HCT116 (cell line): ENCODE measurements at regions of chr2 and their contacts with region 1.

Region 1: GRCh38 chr2:113138428-113139322 is 11.3 kb downstream of the IL1RN start:
- DNase-seq: peak; percentile 79
- ATAC-seq: peak; percentile 80
- H3K4me3 ChIP-seq: 0 out of 4 replicates have a peak overlapping the region, but pooled peaks of 1 of the 2 experiments have one; percentile 5
- H3K27ac ChIP-seq: no peak overlapping the region
- H3K4me1 ChIP-seq: peaks cover 0 to 16% of the 10 kb centered on the region in 2 experiments; a peak in 3 of 4 replicates
- H3K27me3 ChIP-seq: no peaks in the 10 kb centered on the region
- CTCF ChIP-seq: peak; percentile 75 to 93 (median 75)
- POLR2A ChIP-seq: no peak
- RAD21 ChIP-seq: peak; percentile 77

Region 2: GRCh38 chr2:113080134-113080533 is 58.5 kb before region 1 on chr2:
- CTCF ChIA-PET with region 1: interaction called, 24 read pairs
- POLR2A ChIA-PET with region 1: no interaction called
- RAD21 ChIA-PET with region 1: no interaction called
- intact Hi-C with region 1: no loop called
- DNase-seq: peak; percentile 13
- ATAC-seq: peak; percentile 86
- H3K4me3 ChIP-seq: no peak overlapping the region
- H3K27ac ChIP-seq: no peak overlapping the region
- H3K4me1 ChIP-seq: peaks cover 12 to 26% of the 10 kb centered on the region in 2 experiments
- H3K27me3 ChIP-seq: no peaks in the 10 kb centered on the region
- CTCF ChIP-seq: peak; percentile 79 to 91 (median 85)
- POLR2A ChIP-seq: no peak
- RAD21 ChIP-seq: peak; percentile 87

Region 3: DNA sequence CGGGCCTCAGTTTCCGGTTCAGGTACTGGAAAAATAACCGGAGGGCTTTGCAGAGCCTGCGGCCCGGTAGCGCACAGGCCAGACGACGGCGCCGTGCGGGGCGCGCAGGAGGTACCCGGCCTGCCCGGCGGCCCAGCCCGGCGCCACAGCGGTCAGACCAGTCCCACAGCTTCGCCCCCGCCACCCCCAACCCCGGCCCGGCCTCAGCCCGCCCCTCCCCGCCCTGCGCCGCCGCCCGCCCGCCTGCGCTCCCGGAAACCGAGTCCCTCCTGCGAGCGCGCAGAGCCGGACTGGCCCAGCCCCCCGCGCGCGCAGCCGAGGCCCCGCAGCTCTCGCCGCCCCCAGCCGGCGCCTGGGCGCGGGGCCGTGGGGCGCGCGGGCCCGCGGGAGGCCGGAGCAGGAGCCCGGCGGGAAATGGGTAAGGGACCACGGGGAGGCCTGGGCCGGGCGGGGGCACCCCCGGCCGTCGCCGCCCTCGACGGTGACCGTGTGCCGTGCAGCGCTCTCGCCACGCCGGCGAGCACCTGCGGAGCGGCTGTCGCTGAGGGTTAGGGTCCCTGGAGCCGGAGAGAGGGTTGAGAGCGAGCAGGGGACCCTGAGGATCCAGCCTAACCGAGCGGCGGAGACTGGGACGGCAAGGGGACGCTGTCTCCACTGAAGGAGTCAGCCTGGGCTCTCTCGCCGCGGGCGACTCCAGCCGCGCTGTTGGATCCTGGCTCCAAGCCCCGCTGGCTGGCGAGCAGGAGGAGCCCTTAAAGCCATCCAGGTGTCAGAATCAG is 18.6 kb after region 1 on chr2:
- CTCF ChIA-PET with region 1: interaction called, 51 read pairs
- POLR2A ChIA-PET with region 1: interaction called, 7 read pairs
- RAD21 ChIA-PET with region 1: interaction called in 1 of 2 experiments, 4 read pairs
- intact Hi-C with region 1: no loop called
- DNase-seq: no peak
- ATAC-seq: peak; percentile 84
- H3K4me3 ChIP-seq: peak overlapping the region; percentile 66 to 74
- H3K27ac ChIP-seq: peak overlapping the region; percentile 80
- H3K4me1 ChIP-seq: peaks cover 22 to 35% of the 10 kb centered on the region in 2 experiments; a peak in 3 of 4 replicates
- H3K27me3 ChIP-seq: no peaks in the 10 kb centered on the region
- CTCF ChIP-seq: no peak
- POLR2A ChIP-seq: no peak
- RAD21 ChIP-seq: no peak

Region 4: DNA sequence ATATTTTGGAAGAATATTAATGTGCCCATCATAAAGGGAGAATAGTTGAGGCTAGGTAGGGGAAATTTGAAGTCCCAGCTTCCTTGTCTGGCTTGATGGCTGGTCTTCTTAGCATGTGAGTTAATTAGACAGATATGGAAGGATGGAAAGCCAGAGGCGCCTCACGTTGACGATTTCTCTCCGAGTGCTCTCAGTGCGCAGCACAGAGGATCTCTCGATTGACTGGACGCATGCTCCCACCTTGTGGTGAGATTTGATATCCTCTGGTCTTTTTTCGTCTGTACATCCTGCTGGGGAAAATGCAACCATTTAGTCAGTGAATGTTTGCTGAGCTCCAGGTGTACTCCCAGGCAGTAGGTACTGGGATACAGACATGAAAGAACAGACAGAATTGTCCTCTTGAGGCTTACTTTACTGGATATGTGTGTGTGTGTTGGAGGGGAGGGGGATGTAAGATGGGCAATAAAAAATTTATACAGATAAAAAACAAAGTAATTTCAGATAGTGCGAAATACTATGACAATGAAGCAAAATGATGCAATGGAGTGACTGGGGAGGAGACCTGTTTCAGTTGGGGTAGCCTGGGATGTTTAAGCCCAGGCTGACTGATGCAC is 231.9 kb after region 1 on chr2:
- CTCF ChIA-PET with region 1: interaction called, 15 read pairs
- POLR2A ChIA-PET with region 1: no interaction called
- RAD21 ChIA-PET with region 1: interaction called in 1 of 2 experiments, 3 read pairs
- intact Hi-C with region 1: loop called (anchors 1 kb)
- DNase-seq: peak; percentile 65
- ATAC-seq: peak; percentile 97
- H3K4me3 ChIP-seq: no peak overlapping the region
- H3K27ac ChIP-seq: no peak overlapping the region
- H3K4me1 ChIP-seq: peaks cover 0 to 4% of the 10 kb centered on the region in 2 experiments; a peak in 1 of 4 replicates
- H3K27me3 ChIP-seq: no peaks in the 10 kb centered on the region
- CTCF ChIP-seq: peak; percentile 55 to 97 (median 68)
- POLR2A ChIP-seq: no peak
- RAD21 ChIP-seq: peak; percentile 97

Region 5: GRCh38 chr2:113390124-113390849 is 251.6 kb after region 1 on chr2:
- CTCF ChIA-PET with region 1: interaction called, 18 read pairs
- POLR2A ChIA-PET with region 1: no interaction called
- RAD21 ChIA-PET with region 1: no interaction called
- intact Hi-C with region 1: loop called (anchors 5 kb)
- DNase-seq: peak; percentile 72
- ATAC-seq: peak; percentile 83
- H3K4me3 ChIP-seq: no peak overlapping the region
- H3K27ac ChIP-seq: no peak overlapping the region
- H3K4me1 ChIP-seq: no peaks in the 10 kb centered on the region
- H3K27me3 ChIP-seq: no peaks in the 10 kb centered on the region
- CTCF ChIP-seq: peak; percentile 66 to 98 (median 85)
- POLR2A ChIP-seq: no peak
- RAD21 ChIP-seq: peak; percentile 76

Region 6: DNA sequence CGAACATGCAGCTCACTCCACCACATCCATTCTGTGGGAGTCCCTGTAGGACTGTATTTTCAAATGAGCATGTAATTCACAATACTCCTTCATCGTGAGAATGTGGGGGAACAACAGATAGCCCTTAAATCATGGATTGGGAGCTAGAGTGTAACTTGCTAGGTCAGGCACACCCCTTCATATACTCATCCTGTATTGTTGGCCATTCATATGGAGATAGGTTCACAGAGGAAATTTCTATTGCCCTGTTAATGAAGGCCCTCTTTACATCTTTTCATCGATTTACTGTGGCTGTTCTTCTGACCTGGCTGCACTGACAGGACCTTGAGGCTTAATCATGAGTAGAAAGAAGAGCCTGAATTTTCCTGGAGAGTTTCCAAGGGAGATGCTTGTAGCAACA is 1110.0 kb after region 1 on chr2:
- CTCF ChIA-PET with region 1: no interaction called
- POLR2A ChIA-PET with region 1: no interaction called
- RAD21 ChIA-PET with region 1: no interaction called
- intact Hi-C with region 1: no loop called
- DNase-seq: no peak
- ATAC-seq: no peak
- H3K4me3 ChIP-seq: no peak overlapping the region
- H3K27ac ChIP-seq: no peak overlapping the region
- H3K4me1 ChIP-seq: no peaks in the 10 kb centered on the region
- H3K27me3 ChIP-seq: no peaks in the 10 kb centered on the region
- CTCF ChIP-seq: no peak
- POLR2A ChIP-seq: no peak
- RAD21 ChIP-seq: no peak